ENCODE measurements at regions of chr2 and their contacts with region 1.

Region 1: GRCh38 chr2:170815746-170816503 is 762 bp upstream of the GAD1 start:
- DNase-seq: peak; percentile 36 to 82 (median 54)
- ATAC-seq: peak; percentile 65
- H3K4me3 ChIP-seq: peak overlapping the region; percentile 39
- H3K4me3 Mint-ChIP-seq: peak overlapping the region; percentile 84
- H3K27ac ChIP-seq: no peak overlapping the region
- H3K27ac Mint-ChIP-seq: no peak overlapping the region
- H3K4me1 ChIP-seq: peaks cover 70% of the 10 kb centered on the region
- H3K4me1 Mint-ChIP-seq: peaks cover 52% of the 10 kb centered on the region
- H3K27me3 ChIP-seq: peaks cover 76 to 79% of the 10 kb centered on the region in 2 experiments
- H3K27me3 Mint-ChIP-seq: peaks cover 91% of the 10 kb centered on the region
- CTCF ChIP-seq: peak; percentile 86

Region 2: GRCh38 chr2:170324640-170325046 is 491.3 kb before region 1 on chr2:
- CTCF ChIA-PET with region 1: interaction called, 3 read pairs
- POLR2A ChIA-PET with region 1: no interaction called
- intact Hi-C with region 1: loop called (anchors 1 to 2 kb)
- DNase-seq: peak in 8 of 14 experiments; percentile 1 to 55 (median 21)
- ATAC-seq: peak; percentile 43
- H3K4me3 ChIP-seq: no peak overlapping the region
- H3K4me3 Mint-ChIP-seq: no peak overlapping the region
- H3K27ac ChIP-seq: no peak overlapping the region
- H3K27ac Mint-ChIP-seq: no peak overlapping the region
- H3K4me1 ChIP-seq: no peaks in the 10 kb centered on the region
- H3K4me1 Mint-ChIP-seq: no peaks in the 10 kb centered on the region
- H3K27me3 ChIP-seq: no peaks in the 10 kb centered on the region
- H3K27me3 Mint-ChIP-seq: peaks cover 4% of the 10 kb centered on the region
- CTCF ChIP-seq: peak; percentile 51

Region 3: GRCh38 chr2:170396799-170397459 is 419.0 kb before region 1 on chr2:
- CTCF ChIA-PET with region 1: no interaction called
- POLR2A ChIA-PET with region 1: no interaction called
- intact Hi-C with region 1: loop called in 1 of 2 experiments (anchors 1 kb)
- DNase-seq: peak in 1 of 14 experiments; percentile 9
- ATAC-seq: no peak
- H3K4me3 ChIP-seq: no peak overlapping the region
- H3K4me3 Mint-ChIP-seq: no peak overlapping the region
- H3K27ac ChIP-seq: no peak overlapping the region
- H3K27ac Mint-ChIP-seq: no peak overlapping the region
- H3K4me1 ChIP-seq: no peaks in the 10 kb centered on the region
- H3K4me1 Mint-ChIP-seq: no peaks in the 10 kb centered on the region
- H3K27me3 ChIP-seq: peaks cover 7 to 33% of the 10 kb centered on the region in 2 experiments
- H3K27me3 Mint-ChIP-seq: peaks cover 58% of the 10 kb centered on the region
- CTCF ChIP-seq: peak; percentile 26

Region 4: GRCh38 chr2:170486730-170487129 is 329.2 kb before region 1 on chr2:
- CTCF ChIA-PET with region 1: interaction called, 3 read pairs
- POLR2A ChIA-PET with region 1: no interaction called
- intact Hi-C with region 1: loop called (anchors 1 to 2 kb)
- DNase-seq: peak in 3 of 14 experiments; percentile 22 to 40 (median 33)
- ATAC-seq: no peak
- H3K4me3 ChIP-seq: no peak overlapping the region
- H3K4me3 Mint-ChIP-seq: no peak overlapping the region
- H3K27ac ChIP-seq: no peak overlapping the region
- H3K27ac Mint-ChIP-seq: no peak overlapping the region
- H3K4me1 ChIP-seq: no peaks in the 10 kb centered on the region
- H3K4me1 Mint-ChIP-seq: no peaks in the 10 kb centered on the region
- H3K27me3 ChIP-seq: no peaks in the 10 kb centered on the region
- H3K27me3 Mint-ChIP-seq: no peaks in the 10 kb centered on the region
- CTCF ChIP-seq: no peak

Region 5: GRCh38 chr2:170739048-170739447 is 76.9 kb before region 1 on chr2:
- CTCF ChIA-PET with region 1: no interaction called
- POLR2A ChIA-PET with region 1: no interaction called
- intact Hi-C with region 1: loop called in 1 of 2 experiments (anchors 5 kb)
- DNase-seq: no peak
- ATAC-seq: no peak
- H3K4me3 ChIP-seq: no peak overlapping the region
- H3K4me3 Mint-ChIP-seq: no peak overlapping the region
- H3K27ac ChIP-seq: no peak overlapping the region
- H3K27ac Mint-ChIP-seq: no peak overlapping the region
- H3K4me1 ChIP-seq: no peaks in the 10 kb centered on the region
- H3K4me1 Mint-ChIP-seq: no peaks in the 10 kb centered on the region
- H3K27me3 ChIP-seq: peaks cover 5 to 10% of the 10 kb centered on the region in 2 experiments
- H3K27me3 Mint-ChIP-seq: peaks cover 13% of the 10 kb centered on the region
- CTCF ChIP-seq: no peak

Measured in CD4-positive, alpha-beta T cell (primary cell).